Activated naive CD4-positive, alpha-beta T cell treated with anti-CD3 and anti-CD28 coated beads for 36 hours (primary cell): ENCODE measurements at regions of chr19 and their contacts with region 1.

Region 1: DNA sequence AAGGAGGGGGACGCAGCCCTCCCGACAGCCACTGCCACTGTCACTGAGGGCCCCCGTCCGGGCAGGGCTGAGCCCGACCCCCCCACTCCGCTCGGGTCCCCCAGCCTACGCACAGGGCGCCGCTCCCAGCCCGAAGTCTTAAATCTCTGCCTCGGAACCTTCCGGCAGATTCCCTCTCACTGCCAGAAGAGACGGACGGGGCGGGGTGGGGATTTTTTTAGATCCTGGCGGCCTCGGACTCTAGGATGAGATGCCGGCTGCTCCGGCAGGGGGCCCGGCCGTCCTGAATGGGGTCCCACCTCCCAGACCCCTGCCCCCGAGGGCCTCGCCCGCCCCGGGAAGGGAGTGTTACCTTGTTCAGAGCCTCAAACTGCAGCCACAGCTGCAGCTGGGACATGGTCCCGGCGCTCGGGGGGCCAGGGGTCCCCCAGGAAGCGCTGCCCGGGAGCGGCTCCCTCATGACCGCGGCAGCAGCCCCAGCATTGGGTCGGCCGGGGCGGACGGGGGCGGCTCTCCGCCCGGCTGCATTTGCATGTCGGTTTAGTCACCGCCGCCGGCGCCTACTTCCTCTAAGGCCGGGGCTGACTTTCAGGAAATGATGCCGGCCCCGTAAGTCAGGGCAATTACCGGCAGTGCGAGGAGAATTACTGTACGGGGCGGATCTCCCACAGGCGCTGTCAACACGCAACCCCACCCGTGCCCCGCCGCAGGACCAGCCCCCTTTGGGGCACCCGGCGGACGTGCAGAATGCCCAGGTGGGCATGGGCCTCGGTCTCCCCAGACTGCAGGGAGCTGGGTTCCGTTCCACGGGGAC is 28.2 kb downstream of the GPX4 start:
- DNase-seq: peak; percentile 97
- H3K4me3 Mint-ChIP-seq: peak overlapping the region; percentile 95
- H3K27ac Mint-ChIP-seq: peak overlapping the region; percentile 97
- H3K4me1 Mint-ChIP-seq: peaks cover 48% of the 10 kb centered on the region
- H3K27me3 Mint-ChIP-seq: no peaks in the 10 kb centered on the region

Region 2: GRCh38 chr19:900302-901111 is 231.4 kb before region 1 on chr19:
- CTCF ChIA-PET with region 1: no interaction called
- intact Hi-C with region 1: no loop called
- DNase-seq: peak; percentile 54
- H3K4me3 Mint-ChIP-seq: no peak overlapping the region
- H3K27ac Mint-ChIP-seq: no peak overlapping the region
- H3K4me1 Mint-ChIP-seq: peaks cover 28% of the 10 kb centered on the region
- H3K27me3 Mint-ChIP-seq: no peaks in the 10 kb centered on the region

Region 3: DNA sequence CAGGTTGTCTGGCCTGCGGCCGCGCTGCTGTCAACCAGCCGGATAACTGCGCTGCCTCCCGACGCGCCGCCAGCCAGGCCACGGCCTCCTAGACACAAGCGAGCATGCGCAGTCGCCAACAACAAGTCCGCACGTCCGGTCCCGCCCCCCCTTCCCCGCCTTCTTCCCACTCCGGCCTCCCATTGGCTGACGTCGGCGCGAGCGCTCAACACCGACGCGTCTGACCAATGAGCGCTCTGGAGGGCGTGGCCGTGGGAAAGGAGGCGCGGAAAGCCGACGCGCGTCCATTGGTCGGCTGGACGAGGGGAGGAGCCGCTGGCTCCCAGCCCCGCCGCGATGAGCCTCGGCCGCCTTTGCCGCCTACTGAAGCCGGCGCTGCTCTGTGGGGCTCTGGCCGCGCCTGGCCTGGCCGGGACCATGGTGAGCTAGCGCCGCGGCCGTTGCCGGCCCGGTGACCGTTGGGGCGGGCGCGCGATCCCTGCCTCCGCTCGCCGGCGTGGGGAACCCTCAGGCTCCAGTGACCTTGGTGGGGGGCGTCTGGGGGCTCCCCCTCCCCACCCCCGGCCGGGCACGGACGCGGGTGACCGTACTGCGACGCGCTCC is 28.1 kb before region 1 on chr19 and contains the start of gene GPX4:
- CTCF ChIA-PET with region 1: interaction called, 3 read pairs
- intact Hi-C with region 1: loop called (anchors 1 kb)
- DNase-seq: peak; percentile 99
- H3K4me3 Mint-ChIP-seq: peak within 1 kb of the TSS; percentile 72
- H3K27ac Mint-ChIP-seq: peak within 1 kb of the TSS; percentile 79
- H3K4me1 Mint-ChIP-seq: peaks cover 54% of the 10 kb centered on the region
- H3K27me3 Mint-ChIP-seq: no peaks in the 10 kb centered on the region
- total RNA-seq, gene GPX4: 244 to 253 TPM

Region 4: DNA sequence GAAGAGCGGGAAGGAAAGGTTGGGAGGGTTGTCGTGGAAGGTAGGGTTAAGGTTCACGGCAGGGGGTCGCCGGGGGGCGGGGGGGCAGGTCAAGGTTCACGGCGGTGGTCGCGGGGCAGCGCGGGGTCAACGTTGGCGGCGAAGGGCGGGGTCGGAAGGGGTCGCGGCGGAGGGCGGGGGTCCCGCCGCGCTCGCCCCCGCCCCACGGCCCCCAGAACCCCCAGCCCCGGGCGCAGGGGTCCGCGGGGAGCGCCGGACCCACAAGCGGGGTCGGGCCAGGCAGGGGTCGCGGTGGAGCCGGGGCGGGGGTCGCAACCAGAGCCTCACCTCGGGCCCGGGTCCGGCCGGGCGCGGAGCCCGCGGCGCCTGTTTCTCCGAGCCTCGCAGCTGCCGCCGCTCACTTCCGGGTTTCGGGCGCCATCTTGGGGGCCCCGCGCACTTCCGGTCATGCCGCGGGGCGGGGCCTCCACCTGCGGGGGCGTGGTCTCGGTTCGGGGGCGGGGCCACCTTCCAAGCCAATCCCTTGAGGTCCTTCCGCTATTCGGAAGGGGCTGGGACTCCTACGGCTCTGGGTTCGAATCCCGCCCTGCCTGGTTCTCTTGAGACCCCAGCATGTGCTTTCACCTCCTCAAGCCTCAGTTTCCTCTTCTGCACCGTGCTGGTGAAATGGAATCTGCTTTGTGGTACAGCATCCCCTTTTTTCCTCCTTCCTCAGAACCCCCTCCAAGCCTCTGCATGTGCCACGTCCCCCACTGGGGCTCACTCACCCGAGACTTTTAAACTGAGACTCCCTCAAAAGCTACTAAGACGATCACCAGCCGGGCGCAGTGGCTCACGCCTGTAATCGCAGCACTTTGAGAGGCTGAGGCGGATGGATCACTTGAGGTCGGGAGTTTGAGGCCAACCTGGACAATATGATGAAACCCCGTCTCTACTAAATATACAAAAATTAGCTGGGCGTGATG is 42.2 kb after region 1 on chr19 and contains the start of gene SBNO2:
- CTCF ChIA-PET with region 1: no interaction called
- intact Hi-C with region 1: loop called (anchors 1 kb)
- DNase-seq: peak; percentile 96
- H3K4me3 Mint-ChIP-seq: peak within 1 kb of the TSS; percentile 87
- H3K27ac Mint-ChIP-seq: peak within 1 kb of the TSS; percentile 89
- H3K4me1 Mint-ChIP-seq: peaks cover 38% of the 10 kb centered on the region
- H3K27me3 Mint-ChIP-seq: no peaks in the 10 kb centered on the region
- total RNA-seq, gene SBNO2: 112 to 117 TPM

Region 5: DNA sequence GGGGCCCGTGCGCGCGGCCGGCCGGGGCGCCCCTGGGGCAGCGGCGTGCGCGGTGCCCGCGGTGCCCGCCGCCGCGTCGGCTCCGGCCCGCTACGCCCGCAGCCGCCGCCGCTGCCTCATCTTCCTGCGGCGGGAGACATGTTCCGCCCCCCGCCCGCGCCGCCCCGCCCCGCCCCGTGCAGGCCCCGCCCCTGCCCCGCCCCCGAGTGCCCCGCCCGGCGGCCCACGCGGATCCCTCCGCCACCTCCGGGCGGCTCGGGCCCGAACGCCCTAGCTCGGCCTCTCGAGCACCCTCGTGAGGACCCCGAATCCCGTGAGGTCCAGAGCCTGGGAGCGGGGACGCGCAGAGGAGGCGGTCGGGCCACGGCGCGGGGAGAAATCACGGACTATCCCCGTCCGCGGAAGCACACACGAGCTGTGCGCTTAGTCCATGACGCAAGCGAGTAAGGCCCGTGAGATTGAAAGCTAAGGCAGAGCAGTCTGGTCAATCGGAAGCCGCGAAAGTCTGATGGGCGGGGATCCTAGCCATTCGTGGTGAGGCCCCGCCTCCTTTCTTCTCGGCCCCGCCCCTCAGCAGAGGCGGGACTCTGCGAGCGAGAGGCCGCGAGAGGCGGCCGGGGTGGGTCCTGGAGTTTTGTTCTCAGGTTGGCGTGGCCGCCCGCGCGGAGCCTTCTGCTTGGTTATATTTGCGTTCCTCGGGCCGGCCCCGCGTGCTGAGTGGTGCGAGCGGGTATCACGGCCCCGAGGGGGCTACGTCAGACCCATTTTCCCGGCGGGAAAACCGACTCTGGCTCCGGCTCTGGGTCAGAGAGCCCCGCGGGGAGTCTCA is 520.7 kb after region 1 on chr19 and contains the start of gene TCF3:
- CTCF ChIA-PET with region 1: no interaction called
- intact Hi-C with region 1: no loop called
- DNase-seq: peak; percentile 98
- H3K4me3 Mint-ChIP-seq: peak within 1 kb of the TSS; percentile 82
- H3K27ac Mint-ChIP-seq: peak within 1 kb of the TSS; percentile 89
- H3K4me1 Mint-ChIP-seq: peaks cover 19% of the 10 kb centered on the region
- H3K27me3 Mint-ChIP-seq: no peaks in the 10 kb centered on the region
- total RNA-seq, gene TCF3: 84.8 to 86.7 TPM